Activated CD4-positive, alpha-beta memory T cell treated with anti-CD3 and anti-CD28 coated beads, Interleukin-2, amount 10 ng/mL, durations not matched to agents 7 days and 5 days (primary cell): ENCODE measurements at regions of chr3 and their contacts with region 1.

Region 1: GRCh38 chr3:156816800-156817645 is 9.1 kb upstream of the LEKR1 start:
- DNase-seq: peak; percentile 93
- H3K4me3 Mint-ChIP-seq: peak overlapping the region; percentile 86
- H3K27ac Mint-ChIP-seq: peak overlapping the region; percentile 96
- H3K4me1 Mint-ChIP-seq: peaks cover 71% of the 10 kb centered on the region
- H3K27me3 Mint-ChIP-seq: no peaks in the 10 kb centered on the region

Region 2: DNA sequence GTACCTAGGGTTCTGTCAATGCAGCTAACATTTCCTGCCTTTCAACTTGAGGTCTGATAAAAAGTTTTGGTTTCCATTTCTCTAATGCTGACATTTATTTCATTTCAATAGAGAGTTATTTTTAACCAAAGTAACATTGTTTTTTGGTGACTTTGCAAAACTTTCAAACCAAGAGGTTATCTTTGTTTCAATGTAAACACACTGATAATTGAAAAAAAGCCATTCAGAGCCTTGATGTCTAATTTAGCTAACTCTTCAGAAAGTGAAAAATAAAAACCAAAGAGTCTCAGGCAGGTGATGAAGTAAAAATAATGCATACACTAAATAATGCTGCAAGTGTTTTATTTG is 152.2 kb before region 1 on chr3:
- CTCF ChIA-PET with region 1: no interaction called
- POLR2A ChIA-PET with region 1: interaction called, 10 read pairs
- DNase-seq: no peak
- H3K4me3 Mint-ChIP-seq: peak overlapping the region; percentile 59
- H3K27ac Mint-ChIP-seq: peak overlapping the region; percentile 92
- H3K4me1 Mint-ChIP-seq: peaks cover 68% of the 10 kb centered on the region
- H3K27me3 Mint-ChIP-seq: no peaks in the 10 kb centered on the region

Region 3: GRCh38 chr3:157045238-157045850 is 228.3 kb after region 1 on chr3:
- CTCF ChIA-PET with region 1: no interaction called
- POLR2A ChIA-PET with region 1: no interaction called
- DNase-seq: no peak
- H3K4me3 Mint-ChIP-seq: no peak overlapping the region
- H3K27ac Mint-ChIP-seq: no peak overlapping the region
- H3K4me1 Mint-ChIP-seq: no peaks in the 10 kb centered on the region
- H3K27me3 Mint-ChIP-seq: peaks cover 22% of the 10 kb centered on the region

Region 4: GRCh38 chr3:157067114-157067513 is 250.1 kb after region 1 on chr3:
- CTCF ChIA-PET with region 1: no interaction called
- POLR2A ChIA-PET with region 1: interaction called, 11 read pairs
- DNase-seq: peak; percentile 62
- H3K4me3 Mint-ChIP-seq: no peak overlapping the region
- H3K27ac Mint-ChIP-seq: peak overlapping the region; percentile 47
- H3K4me1 Mint-ChIP-seq: peaks cover 30% of the 10 kb centered on the region
- H3K27me3 Mint-ChIP-seq: peaks cover 3% of the 10 kb centered on the region

Region 5: GRCh38 chr3:157130467-157131251 is 313.6 kb after region 1 on chr3:
- CTCF ChIA-PET with region 1: interaction called, 6 read pairs
- POLR2A ChIA-PET with region 1: interaction called, 30 read pairs
- DNase-seq: peak; percentile 82
- H3K4me3 Mint-ChIP-seq: peak overlapping the region; percentile 60
- H3K27ac Mint-ChIP-seq: peak overlapping the region; percentile 99
- H3K4me1 Mint-ChIP-seq: peaks cover 88% of the 10 kb centered on the region
- H3K27me3 Mint-ChIP-seq: no peaks in the 10 kb centered on the region

Region 6: GRCh38 chr3:157631478-157631877 is 814.5 kb after region 1 on chr3:
- CTCF ChIA-PET with region 1: no interaction called
- POLR2A ChIA-PET with region 1: no interaction called
- DNase-seq: no peak
- H3K4me3 Mint-ChIP-seq: no peak overlapping the region
- H3K27ac Mint-ChIP-seq: no peak overlapping the region
- H3K4me1 Mint-ChIP-seq: no peaks in the 10 kb centered on the region
- H3K27me3 Mint-ChIP-seq: peaks cover 4% of the 10 kb centered on the region